ENCODE measurements at regions of chr3 and their contacts with region 1.

Region 1: DNA sequence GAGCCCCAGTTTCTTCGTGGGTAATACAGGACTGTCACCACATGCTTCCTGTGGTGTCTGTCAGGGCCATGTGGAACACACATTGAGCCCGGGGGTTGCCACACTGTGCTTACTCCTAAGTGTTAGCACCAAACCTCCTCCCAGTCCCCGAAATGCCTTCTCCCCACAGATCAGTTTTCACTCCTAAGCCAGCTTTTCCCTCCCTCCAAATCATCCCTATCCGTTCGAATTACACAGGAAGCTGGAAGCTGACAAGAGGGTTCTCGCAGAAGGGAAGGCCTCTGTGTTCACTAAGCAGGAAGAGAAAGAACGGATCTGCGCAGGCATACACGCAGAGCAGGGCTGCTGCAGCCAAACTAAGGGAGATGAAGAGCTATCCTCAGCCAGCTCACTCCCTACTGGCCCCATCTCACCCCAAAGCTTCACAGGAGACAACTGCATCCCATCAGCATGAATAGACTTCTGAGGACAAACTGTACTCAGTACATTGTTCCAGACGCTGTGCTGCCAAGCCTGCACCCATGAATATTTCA is 32.3 kb downstream of the XXYLT1 start:
- DNase-seq: no peak
- H3K4me3 ChIP-seq: no peak overlapping the region
- H3K27ac ChIP-seq: no peak overlapping the region
- H3K4me1 ChIP-seq: peaks cover 0 to 12% of the 10 kb centered on the region in 2 donors
- H3K27me3 ChIP-seq: no peaks in the 10 kb centered on the region
- CTCF ChIP-seq: no peak

Region 2: GRCh38 chr3:195226900-195227447 is 11.7 kb before region 1 on chr3:
- intact Hi-C with region 1: loop called (anchors 2 kb)
- DNase-seq: no peak
- H3K4me3 ChIP-seq: no peak overlapping the region
- H3K27ac ChIP-seq: no peak overlapping the region
- H3K4me1 ChIP-seq: peaks cover 15 to 24% of the 10 kb centered on the region in 2 donors
- H3K27me3 ChIP-seq: no peaks in the 10 kb centered on the region
- CTCF ChIP-seq: no peak

Region 3: GRCh38 chr3:195366200-195366925 is 127.7 kb after region 1 on chr3:
- intact Hi-C with region 1: no loop called
- DNase-seq: no peak
- H3K4me3 ChIP-seq: no peak overlapping the region
- H3K27ac ChIP-seq: no peak overlapping the region
- H3K4me1 ChIP-seq: no peaks in the 10 kb centered on the region
- H3K27me3 ChIP-seq: no peaks in the 10 kb centered on the region
- CTCF ChIP-seq: no peak

Region 4: DNA sequence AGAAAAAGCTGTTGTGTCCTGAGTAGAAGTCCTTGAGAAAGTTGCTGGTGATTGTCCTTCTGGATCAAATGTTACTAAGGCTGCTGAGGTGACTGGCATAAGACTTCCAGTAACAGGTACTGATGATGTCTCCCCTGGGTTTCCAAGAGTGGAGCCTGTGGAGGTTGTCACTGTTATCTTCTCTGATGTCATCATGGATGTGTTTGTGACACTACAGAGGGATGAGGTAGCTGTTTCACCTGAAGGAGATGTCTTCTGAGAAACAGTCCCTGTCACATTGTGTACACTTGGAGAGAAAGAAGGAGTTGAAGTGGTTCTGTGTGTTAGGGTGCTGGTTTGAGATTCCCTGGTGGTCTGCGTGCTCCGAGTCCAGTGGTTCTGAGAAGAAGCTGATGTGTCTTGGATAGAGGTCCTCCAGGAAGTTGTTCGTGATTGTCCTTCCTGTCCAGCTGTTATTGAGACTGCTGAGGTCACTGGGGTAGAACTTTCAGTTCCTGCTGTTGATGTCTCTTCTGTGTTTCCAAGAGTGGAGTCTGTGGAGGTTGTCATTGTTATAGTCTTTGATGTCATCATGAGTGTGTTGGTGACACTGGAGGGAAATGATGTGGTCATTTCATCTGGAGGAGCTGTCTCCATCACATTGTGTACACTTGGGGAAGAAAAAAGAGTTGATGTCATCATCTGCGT is 552.1 kb after region 1 on chr3:
- intact Hi-C with region 1: no loop called
- DNase-seq: no peak
- H3K4me3 ChIP-seq: no peak overlapping the region
- H3K27ac ChIP-seq: no peak overlapping the region
- H3K4me1 ChIP-seq: no peaks in the 10 kb centered on the region
- H3K27me3 ChIP-seq: no peaks in the 10 kb centered on the region
- CTCF ChIP-seq: no peak

Measured in ascending aorta (tissue), 2 donors.